ENCODE measurements at regions of chr20 and their contacts with region 1.

Region 1: DNA sequence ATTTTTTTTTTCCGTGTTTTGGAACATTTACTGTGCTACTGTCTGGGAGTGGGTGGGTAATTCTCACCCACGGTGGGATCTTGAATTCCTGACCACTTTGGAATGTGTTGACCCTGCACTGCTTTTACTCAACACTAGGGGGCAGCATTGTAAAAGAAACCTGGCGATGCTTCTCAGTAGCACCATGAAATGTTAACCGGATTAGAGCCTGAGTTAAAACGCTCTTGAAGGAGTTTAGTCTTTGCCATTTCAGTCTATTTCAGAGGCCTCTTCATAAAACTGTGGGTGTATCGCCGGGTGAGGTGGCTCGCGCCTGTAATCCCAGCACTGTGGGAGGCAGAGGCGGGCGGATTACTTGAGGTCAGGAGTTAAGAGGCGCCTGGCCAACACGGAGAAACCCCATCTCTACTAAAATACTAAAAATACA is 114.4 kb upstream of the PRND start:
- DNase-seq: peak; percentile 30 to 81 (median 50)
- ATAC-seq: peak; percentile 95
- H3K4me3 ChIP-seq: no peak overlapping the region
- H3K4me3 Mint-ChIP-seq: no peak overlapping the region
- H3K27ac ChIP-seq: no peak overlapping the region
- H3K27ac Mint-ChIP-seq: no peak overlapping the region
- H3K4me1 ChIP-seq: peaks cover 3% of the 10 kb centered on the region
- H3K4me1 Mint-ChIP-seq: no peaks in the 10 kb centered on the region
- H3K27me3 ChIP-seq: peaks cover 3 to 26% of the 10 kb centered on the region in 2 experiments
- H3K27me3 Mint-ChIP-seq: peaks cover 16% of the 10 kb centered on the region
- CTCF ChIP-seq: peak; percentile 98

Region 2: DNA sequence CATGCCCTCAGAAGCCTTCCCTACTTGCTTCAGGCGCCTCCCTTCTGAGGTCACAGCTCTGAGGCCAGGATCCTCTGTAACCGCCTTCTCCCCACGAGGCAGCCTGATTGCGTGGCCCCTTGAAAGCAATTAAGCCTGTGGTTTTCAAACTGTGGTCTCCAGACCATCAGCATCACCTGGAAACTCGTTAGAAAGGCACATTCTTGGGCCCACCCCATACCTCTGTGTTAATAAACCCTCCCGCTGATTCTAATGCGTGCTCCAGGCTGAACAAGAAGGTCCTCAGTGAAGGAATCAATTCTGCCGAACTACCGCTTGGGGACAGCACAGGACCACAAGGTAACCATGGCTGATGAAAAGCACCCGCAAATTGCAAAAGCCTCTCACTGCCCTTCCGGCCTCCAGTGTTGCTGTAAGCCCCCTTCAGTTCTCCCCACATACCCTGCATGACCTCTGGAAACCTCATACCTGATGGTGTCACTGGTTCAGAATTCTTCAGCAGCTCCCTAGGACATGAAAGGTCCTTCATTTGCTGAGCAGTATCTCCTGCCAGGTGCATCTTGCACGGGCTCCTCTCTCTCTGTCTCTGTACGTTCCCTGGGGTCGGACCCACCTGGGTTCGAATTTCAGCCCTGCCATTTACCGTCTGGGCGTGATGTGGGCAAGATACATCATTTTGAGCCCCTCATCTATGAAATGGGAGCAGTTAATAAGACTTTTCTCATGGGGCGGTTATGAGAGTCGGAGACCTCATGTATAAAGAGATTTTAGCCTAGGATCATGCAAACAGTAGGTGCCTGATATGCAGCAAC is 498.6 kb before region 1 on chr20:
- CTCF ChIA-PET with region 1: no interaction called
- POLR2A ChIA-PET with region 1: no interaction called
- intact Hi-C with region 1: loop called in 1 of 2 experiments (anchors 5 kb)
- DNase-seq: peak; percentile 33 to 82 (median 46)
- ATAC-seq: peak; percentile 81
- H3K4me3 ChIP-seq: no peak overlapping the region
- H3K4me3 Mint-ChIP-seq: no peak overlapping the region
- H3K27ac ChIP-seq: no peak overlapping the region
- H3K27ac Mint-ChIP-seq: no peak overlapping the region
- H3K4me1 ChIP-seq: peaks cover 6% of the 10 kb centered on the region
- H3K4me1 Mint-ChIP-seq: peaks cover 6% of the 10 kb centered on the region
- H3K27me3 ChIP-seq: peaks cover 0 to 4% of the 10 kb centered on the region in 2 experiments
- H3K27me3 Mint-ChIP-seq: peaks cover 16% of the 10 kb centered on the region
- CTCF ChIP-seq: peak; percentile 90

Region 3: DNA sequence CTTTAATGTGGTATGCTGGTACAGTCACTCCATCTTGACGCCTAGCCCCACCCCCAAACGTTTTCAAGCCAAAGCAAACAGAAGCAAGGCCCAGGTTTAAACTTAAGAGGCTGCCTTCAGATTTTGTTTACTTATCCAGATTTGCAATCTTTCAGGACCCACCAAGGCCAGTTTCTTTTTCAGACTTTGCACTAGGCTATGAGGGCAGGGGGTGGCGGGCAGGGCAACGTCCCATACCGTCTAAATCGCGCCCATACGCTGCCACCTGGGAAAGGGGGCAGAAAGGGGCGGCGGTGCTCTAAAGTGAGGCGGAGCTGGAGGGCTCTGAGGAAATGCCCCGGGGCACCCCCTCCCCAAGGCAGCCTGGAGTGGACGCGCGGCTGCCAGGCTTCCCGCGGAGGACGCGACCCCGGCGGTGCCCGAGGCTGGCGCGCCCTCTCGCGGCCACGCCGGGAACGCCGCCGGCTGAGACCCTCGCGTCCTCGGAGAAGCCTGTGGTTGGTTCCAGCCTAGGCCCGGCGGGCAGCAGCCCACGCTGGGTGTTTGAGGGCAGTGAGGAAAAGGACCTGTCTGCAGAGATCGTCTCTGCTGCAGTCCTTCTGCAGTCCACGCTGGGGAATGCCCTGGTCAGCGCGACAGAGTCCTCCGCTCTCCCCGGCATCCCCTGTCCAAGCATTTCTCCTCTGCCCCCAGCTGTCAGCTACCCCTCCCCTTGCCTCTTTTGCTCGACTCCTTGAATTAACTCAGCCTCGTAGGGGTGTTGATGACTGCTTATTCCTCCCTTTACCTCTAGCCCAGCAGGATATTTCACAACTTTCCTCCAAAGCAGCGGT is 14.8 kb before region 1 on chr20:
- CTCF ChIA-PET with region 1: no interaction called
- POLR2A ChIA-PET with region 1: no interaction called
- intact Hi-C with region 1: no loop called
- DNase-seq: peak in 13 of 14 experiments; percentile 21 to 74 (median 45)
- ATAC-seq: peak; percentile 76
- H3K4me3 ChIP-seq: peak overlapping the region; percentile 55
- H3K4me3 Mint-ChIP-seq: peak overlapping the region; percentile 83
- H3K27ac ChIP-seq: no peak overlapping the region
- H3K27ac Mint-ChIP-seq: no peak overlapping the region
- H3K4me1 ChIP-seq: peaks cover 14% of the 10 kb centered on the region
- H3K4me1 Mint-ChIP-seq: peaks cover 7% of the 10 kb centered on the region
- H3K27me3 ChIP-seq: peaks cover 0 to 7% of the 10 kb centered on the region in 2 experiments
- H3K27me3 Mint-ChIP-seq: peaks cover 27% of the 10 kb centered on the region
- CTCF ChIP-seq: peak; percentile 93

Region 4: GRCh38 chr20:4684837-4685413 is 77.6 kb after region 1 on chr20:
- CTCF ChIA-PET with region 1: no interaction called
- POLR2A ChIA-PET with region 1: no interaction called
- intact Hi-C with region 1: loop called in 1 of 2 experiments (anchors 2 kb)
- DNase-seq: no peak
- ATAC-seq: no peak
- H3K4me3 ChIP-seq: no peak overlapping the region
- H3K4me3 Mint-ChIP-seq: peak overlapping the region; percentile 57
- H3K27ac ChIP-seq: peak overlapping the region in 1 of 2 donors; percentile 40
- H3K27ac Mint-ChIP-seq: peak overlapping the region; percentile 92
- H3K4me1 ChIP-seq: peaks cover 46% of the 10 kb centered on the region
- H3K4me1 Mint-ChIP-seq: peaks cover 58% of the 10 kb centered on the region
- H3K27me3 ChIP-seq: no peaks in the 10 kb centered on the region
- H3K27me3 Mint-ChIP-seq: no peaks in the 10 kb centered on the region
- CTCF ChIP-seq: no peak

Region 5: DNA sequence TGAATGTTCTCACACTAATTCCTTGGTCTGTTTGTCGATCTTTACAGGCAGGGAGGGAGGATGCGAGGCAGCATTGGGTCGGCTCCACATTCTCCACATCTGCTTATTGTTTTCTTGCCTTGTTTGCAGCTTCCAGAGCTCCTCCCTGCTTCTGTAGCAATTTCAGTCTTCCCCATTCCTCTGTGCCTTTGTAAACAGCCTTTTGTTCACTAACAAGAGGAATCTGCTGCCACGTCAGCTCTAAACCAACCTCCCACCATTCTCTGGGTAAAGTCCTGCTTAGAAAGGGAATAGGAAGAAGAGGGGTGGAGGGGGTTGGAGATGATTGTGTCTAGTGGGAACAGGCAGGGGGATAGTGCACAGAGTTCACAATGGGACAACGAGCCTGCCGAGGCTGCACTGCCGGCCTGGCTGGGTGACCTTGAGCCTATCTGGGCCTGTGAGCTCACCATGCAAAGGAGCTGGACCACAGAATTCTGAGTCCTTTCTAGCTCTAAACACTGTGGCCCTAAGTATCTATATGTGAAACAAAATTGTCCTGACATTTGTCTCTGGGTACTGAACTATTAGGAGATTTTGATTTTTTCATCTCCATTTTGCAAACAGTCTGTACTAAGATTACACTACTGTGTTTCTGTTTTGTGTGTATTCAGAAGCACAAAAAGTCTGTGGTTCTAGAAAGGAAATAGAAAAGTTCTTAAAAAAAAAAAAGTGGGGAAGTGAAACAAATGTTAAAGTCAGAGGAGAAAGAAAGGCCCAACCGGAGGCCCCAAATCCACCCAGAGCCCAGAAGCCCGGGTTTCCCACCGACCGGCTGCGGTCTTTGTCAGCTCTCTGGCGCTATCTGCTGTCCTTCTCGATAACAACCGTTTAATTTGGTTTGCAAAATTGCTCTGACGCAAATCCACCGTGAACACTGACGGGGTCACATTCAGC is 113.0 kb after region 1 on chr20:
- CTCF ChIA-PET with region 1: interaction called, 10 read pairs
- POLR2A ChIA-PET with region 1: interaction called, 3 read pairs
- intact Hi-C with region 1: loop called (anchors 1 kb)
- DNase-seq: peak; percentile 60 to 88 (median 70)
- ATAC-seq: peak; percentile 95
- H3K4me3 ChIP-seq: no peak overlapping the region
- H3K4me3 Mint-ChIP-seq: no peak overlapping the region
- H3K27ac ChIP-seq: no peak overlapping the region
- H3K27ac Mint-ChIP-seq: peak overlapping the region; percentile 50
- H3K4me1 ChIP-seq: peaks cover 6% of the 10 kb centered on the region
- H3K4me1 Mint-ChIP-seq: peaks cover 12% of the 10 kb centered on the region
- H3K27me3 ChIP-seq: no peaks in the 10 kb centered on the region
- H3K27me3 Mint-ChIP-seq: no peaks in the 10 kb centered on the region
- CTCF ChIP-seq: peak; percentile 82

Region 6: GRCh38 chr20:4869290-4870193 is 262.2 kb after region 1 on chr20:
- CTCF ChIA-PET with region 1: no interaction called
- POLR2A ChIA-PET with region 1: no interaction called
- intact Hi-C with region 1: loop called in 1 of 2 experiments (anchors 10 kb)
- DNase-seq: peak in 5 of 14 experiments; percentile 4 to 67 (median 44)
- ATAC-seq: peak; percentile 83
- H3K4me3 ChIP-seq: peak overlapping the region; percentile 3
- H3K4me3 Mint-ChIP-seq: peak overlapping the region; percentile 16
- H3K27ac ChIP-seq: no peak overlapping the region
- H3K27ac Mint-ChIP-seq: peak overlapping the region; percentile 69
- H3K4me1 ChIP-seq: peaks cover 5% of the 10 kb centered on the region
- H3K4me1 Mint-ChIP-seq: peaks cover 15% of the 10 kb centered on the region
- H3K27me3 ChIP-seq: no peaks in the 10 kb centered on the region
- H3K27me3 Mint-ChIP-seq: no peaks in the 10 kb centered on the region
- CTCF ChIP-seq: no peak

Region 7: DNA sequence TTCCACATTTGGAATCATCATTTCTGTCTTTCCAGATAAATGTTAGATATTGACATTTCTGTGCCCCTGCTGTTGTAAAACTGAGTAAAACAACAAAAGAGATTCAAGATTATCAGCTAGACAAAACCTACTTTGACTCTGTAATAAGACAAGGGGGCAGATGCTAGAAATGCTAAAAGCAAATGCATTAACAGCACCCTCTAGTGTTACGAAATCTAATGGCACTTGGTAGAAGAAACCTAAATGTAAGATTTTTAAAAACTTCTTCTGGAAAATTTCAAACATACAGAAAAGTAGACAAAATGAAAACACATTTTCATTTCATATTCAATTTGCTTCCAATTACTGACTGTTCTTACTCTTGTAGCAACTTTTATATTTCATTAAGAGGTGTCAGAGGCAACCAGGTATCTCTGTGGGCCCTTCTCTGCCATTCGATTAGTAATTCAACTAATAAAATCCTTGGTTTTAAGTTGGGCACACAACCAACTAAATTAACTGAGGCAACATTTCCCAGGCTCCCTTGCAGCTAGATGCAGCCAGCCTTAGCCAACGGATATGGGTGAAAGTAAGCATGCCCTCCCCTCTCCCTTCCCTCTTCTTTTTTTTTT is 349.0 kb after region 1 on chr20:
- CTCF ChIA-PET with region 1: no interaction called
- POLR2A ChIA-PET with region 1: no interaction called
- intact Hi-C with region 1: loop called (anchors 5 to 10 kb)
- DNase-seq: peak in 3 of 14 experiments; percentile 70 to 80 (median 78)
- ATAC-seq: peak; percentile 84
- H3K4me3 ChIP-seq: no peak overlapping the region
- H3K4me3 Mint-ChIP-seq: no peak overlapping the region
- H3K27ac ChIP-seq: no peak overlapping the region
- H3K27ac Mint-ChIP-seq: peak overlapping the region; percentile 52
- H3K4me1 ChIP-seq: peaks cover 1% of the 10 kb centered on the region
- H3K4me1 Mint-ChIP-seq: peaks cover 8% of the 10 kb centered on the region
- H3K27me3 ChIP-seq: no peaks in the 10 kb centered on the region
- H3K27me3 Mint-ChIP-seq: no peaks in the 10 kb centered on the region
- CTCF ChIP-seq: peak; percentile 96

Region 8: GRCh38 chr20:5100684-5101347 is 493.5 kb after region 1 on chr20:
- CTCF ChIA-PET with region 1: no interaction called
- POLR2A ChIA-PET with region 1: no interaction called
- intact Hi-C with region 1: loop called in 1 of 2 experiments (anchors 1 kb)
- DNase-seq: peak; percentile 60 to 86 (median 74)
- ATAC-seq: peak; percentile 95
- H3K4me3 ChIP-seq: no peak overlapping the region
- H3K4me3 Mint-ChIP-seq: no peak overlapping the region
- H3K27ac ChIP-seq: no peak overlapping the region
- H3K27ac Mint-ChIP-seq: peak overlapping the region; percentile 52
- H3K4me1 ChIP-seq: no peaks in the 10 kb centered on the region
- H3K4me1 Mint-ChIP-seq: peaks cover 17% of the 10 kb centered on the region
- H3K27me3 ChIP-seq: no peaks in the 10 kb centered on the region
- H3K27me3 Mint-ChIP-seq: no peaks in the 10 kb centered on the region
- CTCF ChIP-seq: peak; percentile 97